Endothelial cell of umbilical vein (primary cell): ENCODE measurements at regions of chr13 and their contacts with region 1.

Region 1: GRCh38 chr13:20566898-20567874 is at the start of gene IFT88:
- DNase-seq: peak; percentile 90
- H3K4me3 ChIP-seq: peak within 1 kb of the TSS; percentile 22 to 89 (median 70)
- H3K27ac ChIP-seq: peak within 1 kb of the TSS; percentile 85
- H3K4me1 ChIP-seq: peaks cover 8% of the 10 kb centered on the region
- H3K27me3 ChIP-seq: no peaks in the 10 kb centered on the region
- CTCF ChIP-seq: no peak
- POLR2A ChIP-seq: peak; percentile 57
- total RNA-seq, gene IFT88: 9.1 and 13.7 TPM in 2 replicates

Region 2: GRCh38 chr13:20525690-20526544 is 41.3 kb before region 1 on chr13 and contains the start of gene CRYL1:
- CTCF ChIA-PET with region 1: interaction called, 3 read pairs
- POLR2A ChIA-PET with region 1: interaction called, 6 read pairs
- dilution Hi-C with region 1: no loop called
- intact Hi-C with region 1: loop called (anchors 1 kb)
- DNase-seq: peak; percentile 73
- H3K4me3 ChIP-seq: peak within 1 kb of the TSS; percentile 12 to 87 (median 60)
- H3K27ac ChIP-seq: peak within 1 kb of the TSS; percentile 67
- H3K4me1 ChIP-seq: peaks cover 13% of the 10 kb centered on the region
- H3K27me3 ChIP-seq: no peaks in the 10 kb centered on the region
- CTCF ChIP-seq: no peak
- POLR2A ChIP-seq: peak; percentile 51
- total RNA-seq, gene CRYL1: 13.9 and 18.8 TPM in 2 replicates

Region 3: DNA sequence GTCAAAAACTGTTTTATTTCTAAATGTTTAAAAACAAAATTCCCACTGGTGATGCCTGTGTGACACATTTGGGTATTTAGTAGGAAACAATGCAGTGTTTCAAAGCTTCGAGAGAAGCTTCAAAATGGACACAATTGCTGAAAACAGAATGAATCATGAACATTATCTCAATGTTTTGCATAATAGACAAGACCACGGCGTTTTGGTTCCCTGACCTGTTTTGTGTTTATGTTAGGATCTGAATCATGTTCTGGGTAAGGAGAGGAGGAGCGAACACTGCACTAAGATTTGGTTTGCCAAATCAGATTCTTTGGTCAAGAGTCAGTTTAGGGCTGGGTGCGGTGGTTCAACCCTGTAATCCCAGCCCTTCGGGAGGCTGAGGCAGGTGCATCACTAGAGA is 42.0 kb after region 1 on chr13:
- CTCF ChIA-PET with region 1: no interaction called
- POLR2A ChIA-PET with region 1: no interaction called
- dilution Hi-C with region 1: no loop called
- intact Hi-C with region 1: loop called (anchors 5 kb)
- DNase-seq: peak; percentile 80
- H3K4me3 ChIP-seq: no peak overlapping the region
- H3K27ac ChIP-seq: peak overlapping the region; percentile 65
- H3K4me1 ChIP-seq: peaks cover 18% of the 10 kb centered on the region
- H3K27me3 ChIP-seq: no peaks in the 10 kb centered on the region
- CTCF ChIP-seq: no peak
- POLR2A ChIP-seq: no peak

Region 4: GRCh38 chr13:20703780-20704445 is 136.7 kb after region 1 on chr13:
- CTCF ChIA-PET with region 1: interaction called, 8 read pairs
- POLR2A ChIA-PET with region 1: interaction called, 5 read pairs
- dilution Hi-C with region 1: no loop called
- intact Hi-C with region 1: loop called (anchors 2 kb)
- DNase-seq: peak; percentile 66
- H3K4me3 ChIP-seq: peak overlapping the region in 2 of 3 experiments; percentile 49 to 52
- H3K27ac ChIP-seq: no peak overlapping the region
- H3K4me1 ChIP-seq: peaks cover 8% of the 10 kb centered on the region
- H3K27me3 ChIP-seq: no peaks in the 10 kb centered on the region
- CTCF ChIP-seq: peak; percentile 64 to 69
- POLR2A ChIP-seq: peak; percentile 26

Region 5: DNA sequence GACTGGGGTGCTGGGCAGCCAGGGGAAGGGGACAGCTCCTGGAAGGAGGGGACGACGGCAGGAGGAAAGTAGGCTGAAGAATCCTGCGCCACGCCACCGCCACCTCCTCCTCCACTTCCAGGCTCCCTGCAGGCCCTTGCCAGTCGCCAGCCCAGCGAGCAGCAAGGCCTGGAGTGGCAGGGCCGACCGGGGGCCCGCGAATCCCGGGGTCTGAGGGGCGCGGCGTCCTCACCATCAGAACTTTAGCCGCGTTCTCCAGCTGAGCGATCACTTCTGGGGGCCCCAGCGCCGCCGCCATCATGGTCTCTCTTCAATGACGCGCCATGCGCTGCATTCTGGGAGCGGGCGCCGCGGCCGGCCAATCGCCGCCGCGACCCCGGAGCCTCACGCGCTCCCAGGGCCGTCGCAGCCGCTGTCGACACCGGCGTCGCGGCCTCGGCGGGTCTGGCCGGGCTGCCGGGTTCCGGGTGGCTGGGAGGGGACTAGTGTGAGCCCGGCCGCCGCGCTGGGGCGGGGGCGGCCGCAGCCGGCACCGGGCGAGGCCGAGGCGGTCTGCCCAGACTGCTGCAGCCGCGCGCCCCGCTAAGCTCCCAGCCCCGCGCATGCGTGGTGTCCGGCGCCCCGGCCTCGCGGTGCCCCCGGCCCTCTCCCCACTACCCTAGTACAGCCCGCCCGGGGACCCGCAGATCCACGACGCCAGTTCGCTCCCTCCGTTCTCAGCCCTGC is 335.4 kb after region 1 on chr13 and contains the start of gene XPO4:
- CTCF ChIA-PET with region 1: no interaction called
- POLR2A ChIA-PET with region 1: no interaction called
- dilution Hi-C with region 1: no loop called
- intact Hi-C with region 1: loop called (anchors 2 kb)
- DNase-seq: peak; percentile 81
- H3K4me3 ChIP-seq: peak within 1 kb of the TSS; percentile 60 to 100 (median 86)
- H3K27ac ChIP-seq: peak within 1 kb of the TSS; percentile 65
- H3K4me1 ChIP-seq: peaks cover 12% of the 10 kb centered on the region
- H3K27me3 ChIP-seq: no peaks in the 10 kb centered on the region
- CTCF ChIP-seq: no peak
- POLR2A ChIP-seq: peak; percentile 83
- total RNA-seq, gene XPO4: 21.3 and 22.5 TPM in 2 replicates